ENCODE measurements at regions of chr3 and their contacts with region 1.

Region 1: GRCh38 chr3:156554842-156555687 is at the start of gene SSR3:
- DNase-seq: peak; percentile 99
- ATAC-seq: peak; percentile 99
- H3K4me3 ChIP-seq: peak within 1 kb of the TSS; percentile 83 to 97 (median 90)
- H3K4me3 Mint-ChIP-seq: peak within 1 kb of the TSS; percentile 97
- H3K27ac ChIP-seq: peak within 1 kb of the TSS; percentile 19 to 86
- H3K27ac Mint-ChIP-seq: peak within 1 kb of the TSS; percentile 94
- H3K4me1 ChIP-seq: peaks cover 14 to 16% of the 10 kb centered on the region in 2 donors
- H3K4me1 Mint-ChIP-seq: peaks cover 38% of the 10 kb centered on the region
- H3K27me3 ChIP-seq: no peaks in the 10 kb centered on the region
- H3K27me3 Mint-ChIP-seq: no peaks in the 10 kb centered on the region
- CTCF ChIP-seq: no peak
- total RNA-seq, gene SSR3: 63.1 and 69.2 TPM in 2 replicates

Region 2: GRCh38 chr3:155854141-155854940 is 700.7 kb before region 1 on chr3 and contains the start of gene SLC33A1:
- CTCF ChIA-PET with region 1: no interaction called
- POLR2A ChIA-PET with region 1: no interaction called
- intact Hi-C with region 1: loop called (anchors 1 kb)
- DNase-seq: peak; percentile 100
- ATAC-seq: peak; percentile 90
- H3K4me3 ChIP-seq: peak within 1 kb of the TSS; percentile 82 to 99 (median 92)
- H3K4me3 Mint-ChIP-seq: peak within 1 kb of the TSS; percentile 97
- H3K27ac ChIP-seq: peak within 1 kb of the TSS; percentile 90 to 97
- H3K27ac Mint-ChIP-seq: peak within 1 kb of the TSS; percentile 99
- H3K4me1 ChIP-seq: peaks cover 25 to 37% of the 10 kb centered on the region in 2 donors
- H3K4me1 Mint-ChIP-seq: peaks cover 36% of the 10 kb centered on the region
- H3K27me3 ChIP-seq: no peaks in the 10 kb centered on the region
- H3K27me3 Mint-ChIP-seq: no peaks in the 10 kb centered on the region
- CTCF ChIP-seq: no peak
- total RNA-seq, gene SLC33A1: 26.9 and 29.4 TPM in 2 replicates

Region 3: GRCh38 chr3:156536524-156537231 is 18.4 kb before region 1 on chr3:
- CTCF ChIA-PET with region 1: interaction called, 12 read pairs
- POLR2A ChIA-PET with region 1: no interaction called
- intact Hi-C with region 1: loop called (anchors 1 kb)
- DNase-seq: no peak
- ATAC-seq: no peak
- H3K4me3 ChIP-seq: no peak overlapping the region
- H3K4me3 Mint-ChIP-seq: no peak overlapping the region
- H3K27ac ChIP-seq: no peak overlapping the region
- H3K27ac Mint-ChIP-seq: no peak overlapping the region
- H3K4me1 ChIP-seq: no peaks in the 10 kb centered on the region
- H3K4me1 Mint-ChIP-seq: no peaks in the 10 kb centered on the region
- H3K27me3 ChIP-seq: no peaks in the 10 kb centered on the region
- H3K27me3 Mint-ChIP-seq: no peaks in the 10 kb centered on the region
- CTCF ChIP-seq: no peak

Region 4: GRCh38 chr3:156664831-156665178 is 109.7 kb after region 1 on chr3:
- CTCF ChIA-PET with region 1: interaction called, 3 read pairs
- POLR2A ChIA-PET with region 1: no interaction called
- intact Hi-C with region 1: loop called (anchors 1 kb)
- DNase-seq: no peak
- ATAC-seq: peak; percentile 50
- H3K4me3 ChIP-seq: peak overlapping the region in 2 of 5 experiments; percentile 13 to 22
- H3K4me3 Mint-ChIP-seq: peak overlapping the region; percentile 44
- H3K27ac ChIP-seq: peak overlapping the region; percentile 8 to 13
- H3K27ac Mint-ChIP-seq: peak overlapping the region; percentile 29
- H3K4me1 ChIP-seq: peaks cover 36 to 44% of the 10 kb centered on the region in 2 donors
- H3K4me1 Mint-ChIP-seq: peaks cover 57% of the 10 kb centered on the region
- H3K27me3 ChIP-seq: no peaks in the 10 kb centered on the region
- H3K27me3 Mint-ChIP-seq: no peaks in the 10 kb centered on the region
- CTCF ChIP-seq: no peak

Region 5: GRCh38 chr3:156978481-156978961 is 423.5 kb after region 1 on chr3:
- CTCF ChIA-PET with region 1: no interaction called
- POLR2A ChIA-PET with region 1: no interaction called
- intact Hi-C with region 1: loop called (anchors 1 kb)
- DNase-seq: peak; percentile 87
- ATAC-seq: peak; percentile 86
- H3K4me3 ChIP-seq: peak overlapping the region in 3 of 5 experiments; percentile 0 to 53 (median 5)
- H3K4me3 Mint-ChIP-seq: peak overlapping the region; percentile 74
- H3K27ac ChIP-seq: peak overlapping the region; percentile 74 to 93
- H3K27ac Mint-ChIP-seq: peak overlapping the region; percentile 97
- H3K4me1 ChIP-seq: peaks cover 36 to 43% of the 10 kb centered on the region in 2 donors
- H3K4me1 Mint-ChIP-seq: peaks cover 51% of the 10 kb centered on the region
- H3K27me3 ChIP-seq: no peaks in the 10 kb centered on the region
- H3K27me3 Mint-ChIP-seq: no peaks in the 10 kb centered on the region
- CTCF ChIP-seq: no peak

Region 6: GRCh38 chr3:157088601-157089454 is 533.8 kb after region 1 on chr3:
- CTCF ChIA-PET with region 1: interaction called, 6 read pairs
- POLR2A ChIA-PET with region 1: interaction called, 9 read pairs
- intact Hi-C with region 1: loop called (anchors 1 kb)
- DNase-seq: peak; percentile 96
- ATAC-seq: peak; percentile 91
- H3K4me3 ChIP-seq: peak overlapping the region; percentile 56 to 92 (median 80)
- H3K4me3 Mint-ChIP-seq: peak overlapping the region; percentile 94
- H3K27ac ChIP-seq: peak overlapping the region; percentile 76 to 98
- H3K27ac Mint-ChIP-seq: peak overlapping the region; percentile 98
- H3K4me1 ChIP-seq: peaks cover 19 to 25% of the 10 kb centered on the region in 2 donors
- H3K4me1 Mint-ChIP-seq: peaks cover 25% of the 10 kb centered on the region
- H3K27me3 ChIP-seq: peaks cover 0 to 2% (median 0%) of the 10 kb centered on the region in 4 experiments
- H3K27me3 Mint-ChIP-seq: peaks cover 8% of the 10 kb centered on the region
- CTCF ChIP-seq: no peak

Region 7: DNA sequence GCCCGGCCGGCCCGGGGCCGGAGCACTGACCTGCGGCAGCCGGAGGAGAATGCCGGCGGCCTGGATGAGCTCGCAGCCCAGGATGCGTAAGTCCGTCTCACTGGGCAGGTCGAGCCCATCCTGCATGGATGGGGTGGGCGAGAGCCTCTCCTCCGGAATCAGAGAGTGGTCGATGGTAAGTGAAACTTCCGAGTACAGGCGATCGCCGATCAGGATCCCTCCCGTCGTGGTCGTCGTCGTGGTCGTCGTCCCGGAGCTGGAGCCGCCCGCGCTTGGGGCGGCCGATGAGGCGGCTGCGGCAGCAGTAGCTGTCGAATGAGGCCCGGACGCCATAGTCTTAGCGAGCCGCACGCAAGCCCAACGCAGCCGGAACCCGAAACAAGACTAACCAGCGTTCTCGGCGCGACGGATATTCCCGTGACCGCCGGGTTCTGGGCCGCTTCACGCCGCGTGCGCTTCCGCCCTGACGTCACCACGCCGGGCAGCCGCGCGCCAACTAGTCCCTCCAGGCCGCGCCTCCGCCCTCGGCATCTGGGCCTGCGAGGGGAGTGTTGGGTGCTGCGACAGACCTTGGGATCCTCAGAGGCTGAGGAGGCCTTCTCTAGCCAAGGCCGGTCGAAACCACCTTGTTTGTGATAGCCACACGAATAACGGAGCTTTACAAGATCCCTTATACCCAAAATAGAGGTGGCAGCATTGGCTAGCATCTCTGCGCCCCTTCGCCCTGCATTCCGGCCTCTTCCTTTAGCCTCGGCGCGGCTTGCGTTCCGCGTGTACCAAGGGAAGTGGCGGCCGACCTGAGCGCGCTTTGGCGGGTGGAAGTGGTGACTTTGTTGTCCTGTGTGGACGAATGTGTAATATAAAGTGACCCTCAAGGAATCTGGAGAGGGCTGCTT is 604.9 kb after region 1 on chr3 and contains the start of gene CCNL1:
- CTCF ChIA-PET with region 1: interaction called, 4 read pairs
- POLR2A ChIA-PET with region 1: no interaction called
- intact Hi-C with region 1: loop called (anchors 1 kb)
- DNase-seq: peak; percentile 99
- ATAC-seq: peak; percentile 81
- H3K4me3 ChIP-seq: peak within 1 kb of the TSS; percentile 78 to 100 (median 95)
- H3K4me3 Mint-ChIP-seq: peak within 1 kb of the TSS; percentile 99
- H3K27ac ChIP-seq: peak within 1 kb of the TSS; percentile 99 to 100
- H3K27ac Mint-ChIP-seq: peak within 1 kb of the TSS; percentile 100
- H3K4me1 ChIP-seq: peaks cover 46 to 48% of the 10 kb centered on the region in 2 donors
- H3K4me1 Mint-ChIP-seq: peaks cover 51% of the 10 kb centered on the region
- H3K27me3 ChIP-seq: no peaks in the 10 kb centered on the region
- H3K27me3 Mint-ChIP-seq: no peaks in the 10 kb centered on the region
- CTCF ChIP-seq: no peak
- total RNA-seq, gene CCNL1: 309 and 322 TPM in 2 replicates

Measured in B cell (primary cell).